ENCODE measurements at regions of chr1 and their contacts with region 1.

Region 1: GRCh38 chr1:51729156-51729823 is 112.4 kb downstream of the OSBPL9 start:
- DNase-seq: peak; percentile 90 to 93
- ATAC-seq: peak; percentile 94 to 98 (median 96)
- H3K4me3 ChIP-seq: peak overlapping the region; percentile 47 to 83 (median 68)
- H3K27ac ChIP-seq: peak overlapping the region; percentile 11 to 92 (median 88)
- H3K4me1 ChIP-seq: peaks cover 7 to 72% (median 44%) of the 10 kb centered on the region in 9 donors
- H3K27me3 ChIP-seq: no peaks in the 10 kb centered on the region
- CTCF ChIP-seq: no peak

Region 2: GRCh38 chr1:51417496-51418383 is 311.6 kb before region 1 on chr1:
- intact Hi-C with region 1: no loop called
- DNase-seq: no peak
- ATAC-seq: peak in 2 of 8 donors; percentile 14 to 18
- H3K4me3 ChIP-seq: no peak overlapping the region
- H3K27ac ChIP-seq: peak overlapping the region in 5 of 10 donors; percentile 16 to 65 (median 50)
- H3K4me1 ChIP-seq: peaks cover 0 to 58% (median 29%) of the 10 kb centered on the region in 9 donors
- H3K27me3 ChIP-seq: no peaks in the 10 kb centered on the region
- CTCF ChIP-seq: no peak

Region 3: GRCh38 chr1:51661081-51661518 is 68.2 kb before region 1 on chr1:
- intact Hi-C with region 1: loop called in 1 of 10 experiments (anchors 5 kb)
- DNase-seq: no peak
- ATAC-seq: peak; percentile 71 to 90 (median 84)
- H3K4me3 ChIP-seq: peak overlapping the region in 1 of 10 donors; percentile 1
- H3K27ac ChIP-seq: peak overlapping the region in 8 of 10 donors; percentile 4 to 82 (median 52)
- H3K4me1 ChIP-seq: peaks cover 5 to 75% (median 50%) of the 10 kb centered on the region in 9 donors
- H3K27me3 ChIP-seq: no peaks in the 10 kb centered on the region
- CTCF ChIP-seq: no peak